ENCODE measurements at regions of chr3 and their contacts with region 1.

Region 1: DNA sequence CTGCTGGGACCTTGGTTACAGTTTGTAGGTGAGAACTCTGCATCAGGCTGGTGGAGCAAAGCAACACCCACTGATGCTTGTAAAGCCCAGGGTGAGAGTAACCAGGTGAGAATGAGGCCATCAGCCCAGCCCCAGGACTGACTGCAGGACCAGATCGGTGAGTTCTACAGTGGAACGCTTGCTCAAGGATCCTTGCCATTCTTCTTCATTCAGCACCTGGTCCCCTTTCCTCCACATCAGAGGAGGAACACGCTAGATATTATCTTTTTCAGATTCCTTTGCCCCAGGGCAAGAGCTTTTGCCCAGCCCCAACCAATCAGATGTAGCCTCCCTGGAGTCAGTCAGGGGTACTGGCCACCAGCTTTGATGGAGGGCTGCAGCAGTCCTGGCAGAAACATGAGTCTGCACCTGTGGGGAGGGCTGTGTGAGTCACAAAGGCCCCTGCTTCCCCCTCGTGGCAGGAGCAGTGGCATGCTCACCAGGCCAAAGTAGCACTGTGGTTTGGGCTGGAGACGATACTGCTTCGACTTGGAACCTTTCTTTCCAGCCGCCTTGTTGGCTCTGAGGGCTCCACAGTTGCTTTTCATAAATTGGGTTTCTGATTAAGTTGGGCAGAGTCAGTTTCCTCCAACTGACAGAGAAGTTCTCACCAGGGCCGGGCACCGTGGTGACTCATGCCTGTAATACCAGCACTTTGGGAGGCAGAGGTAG is 3.5 kb upstream of the SHISA5 start:
- DNase-seq: peak; percentile 73 to 83
- ATAC-seq: no peak
- H3K4me3 ChIP-seq: no peak overlapping the region
- H3K27ac ChIP-seq: peak overlapping the region in 1 of 2 donors; percentile 73
- H3K4me1 ChIP-seq: no peaks in the 10 kb centered on the region
- H3K27me3 ChIP-seq: no peaks in the 10 kb centered on the region

Region 2: DNA sequence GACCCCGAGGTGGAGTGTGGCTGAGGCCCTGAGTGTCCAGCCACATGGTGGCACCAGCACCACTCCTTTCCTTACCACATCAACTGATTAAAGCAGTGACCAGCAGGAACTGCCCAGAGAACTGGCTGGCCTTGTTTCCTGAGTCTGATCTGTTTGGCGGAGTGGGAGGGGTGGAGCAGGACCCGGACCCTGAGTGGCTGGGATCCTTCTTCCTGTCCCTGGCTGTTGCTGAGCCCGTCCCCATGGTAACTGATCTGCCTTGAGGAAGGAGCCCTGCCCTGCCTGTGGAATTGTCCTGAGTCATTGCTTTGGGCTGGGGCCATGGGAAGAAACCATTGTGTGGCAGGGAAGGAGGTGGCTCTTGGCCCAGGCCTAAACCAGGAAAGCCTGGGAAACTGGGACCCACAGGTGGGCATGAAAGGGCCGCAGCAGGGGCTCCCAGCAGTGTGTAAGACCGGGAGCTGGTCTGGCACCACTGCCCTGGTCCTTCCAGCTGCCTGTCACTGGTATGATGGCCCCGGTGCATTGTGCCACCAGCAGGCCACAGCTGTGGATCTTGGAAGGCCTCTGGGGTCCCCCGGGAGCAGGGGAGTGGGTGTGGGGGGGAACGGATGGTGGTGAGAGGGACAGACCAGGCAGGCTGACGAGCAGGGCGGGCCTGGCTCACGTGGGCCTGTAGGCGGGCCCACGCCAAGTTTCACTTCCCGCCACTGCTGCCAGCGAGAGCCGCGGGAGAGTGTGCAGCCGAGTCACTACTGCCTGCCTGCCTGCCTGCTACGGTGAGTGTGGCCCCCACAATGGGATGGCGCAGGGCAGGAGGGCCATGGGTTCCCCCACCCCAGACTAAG is 41.8 kb before region 1 on chr3:
- intact Hi-C with region 1: loop called (anchors 1 to 5 kb)
- DNase-seq: peak; percentile 98 to 99
- ATAC-seq: peak; percentile 96
- H3K4me3 ChIP-seq: peak overlapping the region in 1 of 2 donors; percentile 26
- H3K27ac ChIP-seq: peak overlapping the region; percentile 50 to 94
- H3K4me1 ChIP-seq: no peaks in the 10 kb centered on the region
- H3K27me3 ChIP-seq: no peaks in the 10 kb centered on the region

Region 3: DNA sequence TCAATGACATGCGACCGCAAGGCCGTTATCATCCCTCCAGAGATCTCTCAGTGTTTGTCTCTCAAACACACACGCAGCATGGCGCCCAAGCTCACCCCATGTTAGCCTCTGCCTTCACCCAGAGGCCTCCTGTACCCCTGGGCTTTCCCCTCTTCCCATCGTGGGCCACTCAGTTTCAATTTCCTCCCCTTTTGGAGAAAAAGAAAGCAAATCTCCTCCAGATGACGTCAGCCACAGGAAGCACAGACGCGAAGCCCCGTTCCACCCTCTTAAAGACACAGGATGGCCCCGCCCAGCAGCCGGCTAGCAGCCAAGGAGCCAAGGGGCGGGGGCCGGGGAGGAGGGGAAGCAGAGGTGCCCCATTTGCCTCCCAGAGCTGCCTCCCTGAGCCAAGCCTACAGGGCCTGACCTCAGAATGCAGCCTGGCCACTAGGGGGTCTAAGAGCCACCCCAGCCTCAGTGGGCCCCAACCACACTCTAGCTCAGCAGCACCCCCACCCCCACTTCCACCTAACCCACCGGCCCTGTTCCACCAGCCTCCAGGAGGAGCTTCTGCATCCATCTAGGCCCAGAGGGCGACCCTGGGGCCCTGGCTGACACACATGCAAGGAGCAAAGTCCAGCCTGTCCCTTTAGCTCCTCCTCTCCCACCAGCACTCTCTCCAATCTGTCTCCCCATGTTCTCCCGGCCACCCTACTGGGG is 34.4 kb before region 1 on chr3:
- intact Hi-C with region 1: loop called (anchors 1 to 5 kb)
- DNase-seq: peak; percentile 96
- ATAC-seq: peak; percentile 94
- H3K4me3 ChIP-seq: peak overlapping the region; percentile 77 to 96
- H3K27ac ChIP-seq: peak overlapping the region; percentile 71 to 99
- H3K4me1 ChIP-seq: no peaks in the 10 kb centered on the region
- H3K27me3 ChIP-seq: no peaks in the 10 kb centered on the region

Region 4: DNA sequence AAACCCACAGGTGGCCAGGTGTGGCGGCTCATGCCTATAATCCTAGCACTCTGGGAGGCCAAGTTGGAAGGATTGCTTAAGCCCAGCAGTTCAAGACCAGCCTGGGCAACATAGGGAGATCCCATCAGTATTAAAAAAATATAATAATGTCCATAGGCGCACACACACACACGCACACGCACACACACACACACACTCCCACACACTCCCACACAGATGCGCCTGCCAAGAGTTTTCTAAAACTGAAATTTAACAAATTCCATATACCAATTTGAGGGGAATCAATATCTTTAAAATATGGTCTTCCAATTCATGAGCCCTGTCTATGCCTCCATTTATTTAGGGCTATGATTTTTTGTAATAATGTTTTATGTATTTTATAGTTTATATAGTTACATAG is 20.6 kb before region 1 on chr3:
- intact Hi-C with region 1: no loop called
- DNase-seq: no peak
- ATAC-seq: no peak
- H3K4me3 ChIP-seq: no peak overlapping the region
- H3K27ac ChIP-seq: no peak overlapping the region
- H3K4me1 ChIP-seq: no peaks in the 10 kb centered on the region
- H3K27me3 ChIP-seq: no peaks in the 10 kb centered on the region

Region 5: DNA sequence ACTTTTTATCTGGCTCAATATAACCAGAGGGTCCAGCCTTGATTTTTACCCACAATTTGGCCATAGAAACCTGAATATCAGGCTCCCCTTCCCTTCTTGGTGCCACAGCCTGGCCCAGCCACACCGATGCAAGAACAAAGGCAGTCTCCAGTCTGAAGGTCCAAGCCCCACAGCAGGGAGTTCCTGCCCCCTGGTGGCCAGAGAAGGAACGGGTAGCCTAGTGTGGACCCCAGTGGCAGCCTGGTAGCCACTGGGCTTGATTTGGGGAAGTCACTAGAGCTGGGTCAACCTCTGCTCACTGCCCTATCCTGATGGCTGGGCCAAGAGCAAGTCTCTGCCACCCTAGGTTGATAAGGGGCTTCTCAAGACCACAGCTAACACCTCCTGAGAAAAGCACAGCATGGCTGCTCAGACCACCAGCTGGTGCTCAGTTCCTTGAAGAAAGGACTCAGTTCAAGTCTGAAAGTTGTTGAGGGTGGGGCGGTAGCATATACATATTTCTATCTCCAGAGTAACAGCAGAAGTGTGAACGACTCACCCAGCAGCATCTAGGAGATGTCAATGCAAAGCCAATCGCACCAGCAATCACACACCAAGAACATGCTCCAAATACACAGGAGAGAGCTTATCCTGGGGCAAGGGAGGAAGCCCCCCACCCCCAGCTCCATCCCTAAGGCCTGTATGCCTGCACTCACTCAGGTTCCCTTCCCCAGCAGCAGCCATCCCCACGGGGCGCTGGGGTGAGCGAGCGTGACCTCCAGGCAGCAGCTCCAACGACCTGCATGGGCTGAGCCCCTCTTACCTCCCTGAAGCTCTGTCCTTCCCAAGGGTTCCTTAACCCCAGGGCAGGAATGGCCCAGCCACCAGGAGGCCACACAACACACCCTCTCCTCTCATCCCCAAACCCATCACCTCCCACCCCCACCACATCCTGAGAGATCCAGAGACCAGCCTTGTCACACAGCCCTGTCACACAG is 41.5 kb after region 1 on chr3:
- intact Hi-C with region 1: loop called (anchors 5 kb)
- DNase-seq: peak; percentile 91 to 95
- ATAC-seq: peak; percentile 93
- H3K4me3 ChIP-seq: no peak overlapping the region
- H3K27ac ChIP-seq: no peak overlapping the region
- H3K4me1 ChIP-seq: no peaks in the 10 kb centered on the region
- H3K27me3 ChIP-seq: no peaks in the 10 kb centered on the region

Measured in aorta (tissue), 5 donors.